ENCODE measurements at regions of chr11 and their contacts with region 1.

Region 1: GRCh38 chr11:118956094-118956846 is at the start of gene UPK2:
- DNase-seq: peak; percentile 79 to 88 (median 81)
- H3K4me3 ChIP-seq: no peak within 1 kb of the TSS
- H3K27ac ChIP-seq: no peak within 1 kb of the TSS
- H3K4me1 ChIP-seq: no peaks in the 10 kb centered on the region
- H3K27me3 ChIP-seq: no peaks in the 10 kb centered on the region

Region 2: DNA sequence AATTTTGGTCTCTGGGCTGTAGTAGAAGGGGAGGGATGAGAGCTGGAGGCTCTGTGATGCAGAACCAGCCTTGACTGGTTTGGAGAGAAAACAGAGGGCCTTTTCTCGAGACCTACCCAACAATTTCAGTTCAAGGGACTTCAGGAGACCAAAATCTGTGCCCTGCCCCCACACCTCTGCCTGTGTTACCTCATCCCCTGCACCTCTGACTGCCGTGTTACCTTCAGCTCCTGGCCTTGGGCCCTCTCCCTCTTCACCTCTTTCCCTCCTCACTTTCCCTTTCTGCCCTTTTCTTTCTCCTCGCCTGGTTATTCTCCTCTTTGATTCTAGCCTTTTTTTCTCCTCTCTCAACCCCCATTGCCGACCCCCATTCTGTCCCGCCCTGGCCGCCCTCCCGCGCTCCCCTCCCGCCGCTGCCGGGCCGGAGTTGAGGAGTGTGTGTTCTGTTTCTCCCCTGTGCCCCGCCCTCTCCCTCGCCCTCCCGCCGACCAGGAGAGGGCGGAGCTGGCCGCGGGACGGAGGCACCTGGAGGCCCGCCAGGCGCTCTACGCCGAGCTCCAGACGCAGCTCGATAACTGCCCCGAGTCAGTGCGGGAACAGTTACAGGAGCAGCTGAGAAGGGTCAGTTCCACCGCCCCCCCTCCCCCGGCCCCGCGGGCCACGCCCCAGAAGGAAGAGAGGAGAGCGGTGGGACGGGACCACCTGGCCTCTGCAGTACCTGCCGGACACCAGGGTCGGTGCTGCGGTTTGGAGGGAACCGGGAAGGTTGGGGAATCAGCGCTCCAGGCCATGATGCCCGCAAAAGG is 321.6 kb before region 1 on chr11:
- CTCF ChIA-PET with region 1: no interaction called
- POLR2A ChIA-PET with region 1: no interaction called
- DNase-seq: peak in 2 of 3 donors; percentile 22 to 34
- H3K4me3 ChIP-seq: peak overlapping the region in 1 of 7 experiments; percentile 58
- H3K27ac ChIP-seq: no peak overlapping the region
- H3K4me1 ChIP-seq: peaks cover 0 to 6% (median 0%) of the 10 kb centered on the region in 4 experiments
- H3K27me3 ChIP-seq: no peaks in the 10 kb centered on the region

Region 3: DNA sequence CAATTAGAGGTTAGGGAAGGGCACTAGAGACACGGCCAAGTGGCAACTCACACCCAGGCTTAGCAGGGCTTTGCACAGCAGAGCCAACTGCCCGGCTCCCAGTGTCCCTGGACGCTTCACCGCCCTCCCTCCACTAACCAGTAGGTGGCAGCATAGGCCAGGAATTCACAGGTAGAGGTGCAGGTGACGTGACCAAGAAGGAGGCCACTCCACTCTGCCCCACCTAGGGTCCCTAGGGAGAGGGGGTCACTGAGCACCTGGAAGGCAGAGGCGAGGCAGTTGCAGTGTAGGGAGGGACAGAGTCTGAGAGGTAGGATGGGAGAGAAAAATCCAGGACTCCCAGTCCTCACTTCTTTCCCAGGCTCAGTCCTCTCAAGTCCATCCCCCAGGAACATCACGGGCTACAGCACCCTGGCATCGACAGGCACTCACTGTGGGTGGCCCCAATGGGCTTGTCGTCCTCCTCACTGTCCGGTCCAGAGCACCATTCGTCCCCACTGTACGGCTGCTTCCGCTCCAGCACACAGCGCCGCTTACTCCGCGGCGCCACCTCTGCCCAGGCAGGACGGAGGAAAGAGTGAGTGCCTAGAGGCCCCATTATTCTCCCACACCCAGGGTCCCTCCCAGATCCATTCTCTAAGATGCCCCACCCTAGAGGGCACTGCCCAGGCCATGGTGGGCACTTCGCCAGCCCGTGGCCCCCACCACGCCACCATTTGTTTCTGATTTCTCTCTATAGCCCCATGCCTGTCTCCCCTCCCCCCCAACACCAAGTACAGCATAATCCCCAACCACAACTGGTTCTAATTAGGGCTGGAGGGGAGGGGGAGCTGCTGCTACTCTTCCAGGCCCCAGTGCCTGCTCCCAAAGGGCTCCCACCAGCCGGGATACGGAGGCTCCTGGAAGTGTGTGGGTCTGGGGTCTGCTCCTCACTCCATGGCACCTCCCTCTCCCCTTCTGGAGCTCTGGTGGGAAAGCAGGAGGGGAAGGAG is 48.9 kb before region 1 on chr11:
- CTCF ChIA-PET with region 1: interaction called, 48 read pairs
- POLR2A ChIA-PET with region 1: no interaction called
- DNase-seq: peak; percentile 71 to 85 (median 79)
- H3K4me3 ChIP-seq: no peak overlapping the region
- H3K27ac ChIP-seq: no peak overlapping the region
- H3K4me1 ChIP-seq: peaks cover 0 to 42% (median 37%) of the 10 kb centered on the region in 4 experiments
- H3K27me3 ChIP-seq: no peaks in the 10 kb centered on the region

Region 4: DNA sequence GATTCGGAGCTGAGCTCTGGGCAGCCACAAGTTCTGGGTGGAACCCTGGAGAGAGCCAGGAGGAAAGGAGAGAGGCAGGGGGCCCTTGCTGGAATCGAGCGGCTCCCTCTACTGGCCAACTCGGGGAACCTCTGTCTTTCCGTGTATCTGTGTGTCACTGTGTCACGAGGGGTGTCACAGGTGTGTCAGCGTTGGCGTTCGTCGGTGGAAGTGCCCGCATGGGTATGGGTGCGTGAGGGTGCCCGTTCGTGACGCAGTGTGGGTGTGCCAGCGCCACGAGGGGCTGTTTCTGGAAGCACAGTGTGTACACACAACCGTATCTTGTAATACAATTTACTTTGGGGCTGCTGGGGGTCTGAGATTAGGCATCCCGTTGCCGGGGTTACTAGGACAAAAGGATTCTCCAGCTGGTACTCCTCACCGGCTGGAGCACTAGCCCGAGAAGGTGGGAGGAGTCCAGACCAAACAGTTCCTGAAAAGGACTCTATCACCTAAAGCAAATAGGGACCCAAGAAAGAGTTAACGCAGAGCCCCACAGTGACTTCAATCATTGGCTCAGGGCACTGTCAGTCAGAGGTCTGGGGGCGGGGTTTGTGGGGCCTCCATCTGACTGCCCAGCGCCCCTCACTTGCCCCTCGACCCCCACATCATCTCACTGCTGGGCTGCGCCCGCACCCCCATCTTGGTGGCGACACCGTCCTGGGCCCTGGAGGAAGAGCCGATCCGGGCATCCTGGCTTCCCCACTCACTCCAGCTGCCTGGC is 28.0 kb before region 1 on chr11:
- CTCF ChIA-PET with region 1: interaction called, 23 read pairs
- POLR2A ChIA-PET with region 1: no interaction called
- DNase-seq: peak; percentile 92 to 95 (median 94)
- H3K4me3 ChIP-seq: peak overlapping the region; percentile 66 to 93 (median 82)
- H3K27ac ChIP-seq: peak overlapping the region; percentile 76 to 93
- H3K4me1 ChIP-seq: peaks cover 5 to 75% (median 51%) of the 10 kb centered on the region in 4 experiments
- H3K27me3 ChIP-seq: no peaks in the 10 kb centered on the region

Region 5: DNA sequence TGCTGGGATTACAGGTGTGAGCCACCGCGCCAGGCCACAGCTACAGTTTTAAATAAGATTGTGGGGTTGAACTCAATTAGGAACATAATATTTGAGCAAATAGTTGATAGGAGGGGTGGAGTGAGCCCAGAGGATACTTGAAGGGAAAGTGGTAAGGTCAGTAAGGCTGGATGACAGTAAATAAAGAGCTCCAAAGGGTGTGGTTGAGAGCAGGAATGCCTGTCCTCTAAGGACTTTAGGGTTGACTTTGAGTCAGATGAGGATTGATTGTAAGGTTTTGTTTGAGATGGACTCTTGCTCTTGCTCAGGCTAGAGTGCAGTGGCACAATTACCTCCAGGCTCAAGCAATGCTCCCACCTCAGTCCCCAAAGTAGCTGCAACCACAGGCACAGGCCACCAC is 17.7 kb after region 1 on chr11:
- CTCF ChIA-PET with region 1: interaction called, 12 read pairs
- POLR2A ChIA-PET with region 1: no interaction called
- DNase-seq: no peak
- H3K4me3 ChIP-seq: no peak overlapping the region
- H3K27ac ChIP-seq: no peak overlapping the region
- H3K4me1 ChIP-seq: peaks cover 0 to 4% (median 2%) of the 10 kb centered on the region in 4 experiments
- H3K27me3 ChIP-seq: peaks cover 0 to 14% (median 4%) of the 10 kb centered on the region in 5 experiments

Region 6: GRCh38 chr11:119196833-119197483 is 240.7 kb after region 1 on chr11:
- CTCF ChIA-PET with region 1: no interaction called
- POLR2A ChIA-PET with region 1: no interaction called
- DNase-seq: peak; percentile 89 to 95 (median 92)
- H3K4me3 ChIP-seq: no peak overlapping the region
- H3K27ac ChIP-seq: no peak overlapping the region
- H3K4me1 ChIP-seq: peaks cover 0 to 4% (median 3%) of the 10 kb centered on the region in 4 experiments
- H3K27me3 ChIP-seq: no peaks in the 10 kb centered on the region